Naive thymus-derived CD4-positive, alpha-beta T cell (primary cell): ENCODE measurements at regions of chr5 and their contacts with region 1.

Region 1: DNA sequence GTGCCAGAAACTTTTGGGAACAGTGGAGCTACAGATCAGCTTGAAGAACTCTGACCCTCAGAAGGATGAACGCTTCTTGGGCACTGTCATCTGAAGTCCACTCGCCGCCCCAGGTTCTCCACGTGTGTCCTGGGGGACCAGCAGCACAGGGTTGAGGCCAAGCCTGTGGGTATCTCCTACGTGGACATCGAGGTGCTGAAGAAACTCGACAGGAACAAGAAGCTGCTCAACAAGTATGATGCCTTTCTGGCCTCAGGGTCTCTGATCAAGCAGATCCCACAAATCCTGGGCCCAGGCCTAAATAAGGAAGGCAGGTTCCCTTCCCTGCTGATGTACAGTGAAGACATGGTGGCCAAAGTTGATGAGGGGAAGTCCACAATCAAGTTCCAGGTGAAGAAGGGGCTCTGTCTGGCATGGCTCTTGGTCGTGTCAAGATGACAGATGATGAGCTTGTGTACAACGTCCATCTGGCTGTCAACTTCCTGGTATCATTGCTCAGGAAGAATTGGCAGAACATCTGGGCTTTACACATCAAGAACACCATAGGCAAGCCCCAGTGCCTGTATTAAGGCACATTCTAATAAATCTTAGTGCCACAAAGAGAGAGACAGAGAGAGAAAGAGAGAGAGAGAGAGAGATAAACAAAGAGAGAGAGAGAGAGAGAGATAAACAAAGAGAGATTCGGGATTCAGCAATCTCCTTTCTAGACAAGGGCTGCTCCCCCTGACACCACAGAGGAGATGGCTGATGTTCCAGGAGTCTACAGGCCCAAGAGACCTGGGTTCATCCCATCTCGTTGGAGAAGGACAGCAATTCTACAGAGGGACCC is 45.4 kb upstream of the HSPA9 start:
- DNase-seq: no peak
- ATAC-seq: no peak
- H3K4me3 ChIP-seq: no peak overlapping the region
- H3K4me3 Mint-ChIP-seq: no peak overlapping the region
- H3K27ac ChIP-seq: no peak overlapping the region
- H3K27ac Mint-ChIP-seq: no peak overlapping the region
- H3K4me1 ChIP-seq: no peaks in the 10 kb centered on the region
- H3K4me1 Mint-ChIP-seq: no peaks in the 10 kb centered on the region
- H3K27me3 ChIP-seq: no peaks in the 10 kb centered on the region
- H3K27me3 Mint-ChIP-seq: peaks cover 40 to 62% (median 48%) of the 10 kb centered on the region in 5 donors

Region 2: DNA sequence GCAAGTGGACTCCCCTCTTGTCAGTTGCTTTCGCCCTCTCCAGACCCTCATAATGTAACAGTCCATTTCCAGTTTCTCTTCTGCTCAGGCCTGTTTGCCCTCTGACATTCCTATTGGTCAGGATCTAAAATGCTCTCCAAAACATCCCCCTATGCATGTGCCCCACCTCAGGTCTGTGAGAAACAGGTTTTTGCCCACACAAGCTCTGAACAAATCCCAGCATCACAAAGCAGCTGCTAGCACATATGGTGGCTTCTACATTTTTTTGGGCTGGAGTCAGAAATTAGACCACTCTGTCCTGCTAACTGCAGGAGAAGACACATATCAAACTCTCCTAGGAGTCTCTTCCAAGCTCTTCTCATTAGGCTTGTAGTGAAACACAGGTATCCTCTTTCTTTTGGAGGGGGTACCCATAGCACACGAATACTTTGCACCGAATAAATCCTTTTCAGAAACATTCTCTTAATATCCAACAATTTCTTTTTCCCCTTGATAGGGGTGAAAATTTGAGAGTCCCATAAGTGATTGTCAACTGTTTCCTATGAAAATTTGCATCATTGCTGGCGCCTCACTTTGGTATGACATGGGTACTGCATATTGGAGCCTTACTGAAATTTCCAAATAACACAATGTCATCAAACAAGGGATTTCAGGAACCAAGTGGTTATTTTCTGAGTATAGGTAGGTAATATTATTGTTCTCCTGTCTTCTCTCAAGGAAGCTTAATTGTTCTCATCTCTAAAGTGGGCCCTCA is 26.1 kb before region 1 on chr5:
- CTCF ChIA-PET with region 1: no interaction called
- POLR2A ChIA-PET with region 1: no interaction called
- intact Hi-C with region 1: no loop called
- DNase-seq: no peak
- ATAC-seq: no peak
- H3K4me3 ChIP-seq: no peak overlapping the region
- H3K4me3 Mint-ChIP-seq: no peak overlapping the region
- H3K27ac ChIP-seq: no peak overlapping the region
- H3K27ac Mint-ChIP-seq: no peak overlapping the region
- H3K4me1 ChIP-seq: no peaks in the 10 kb centered on the region
- H3K4me1 Mint-ChIP-seq: no peaks in the 10 kb centered on the region
- H3K27me3 ChIP-seq: peaks cover 0 to 4% of the 10 kb centered on the region in 2 donors
- H3K27me3 Mint-ChIP-seq: peaks cover 31 to 51% (median 48%) of the 10 kb centered on the region in 5 donors

Region 3: DNA sequence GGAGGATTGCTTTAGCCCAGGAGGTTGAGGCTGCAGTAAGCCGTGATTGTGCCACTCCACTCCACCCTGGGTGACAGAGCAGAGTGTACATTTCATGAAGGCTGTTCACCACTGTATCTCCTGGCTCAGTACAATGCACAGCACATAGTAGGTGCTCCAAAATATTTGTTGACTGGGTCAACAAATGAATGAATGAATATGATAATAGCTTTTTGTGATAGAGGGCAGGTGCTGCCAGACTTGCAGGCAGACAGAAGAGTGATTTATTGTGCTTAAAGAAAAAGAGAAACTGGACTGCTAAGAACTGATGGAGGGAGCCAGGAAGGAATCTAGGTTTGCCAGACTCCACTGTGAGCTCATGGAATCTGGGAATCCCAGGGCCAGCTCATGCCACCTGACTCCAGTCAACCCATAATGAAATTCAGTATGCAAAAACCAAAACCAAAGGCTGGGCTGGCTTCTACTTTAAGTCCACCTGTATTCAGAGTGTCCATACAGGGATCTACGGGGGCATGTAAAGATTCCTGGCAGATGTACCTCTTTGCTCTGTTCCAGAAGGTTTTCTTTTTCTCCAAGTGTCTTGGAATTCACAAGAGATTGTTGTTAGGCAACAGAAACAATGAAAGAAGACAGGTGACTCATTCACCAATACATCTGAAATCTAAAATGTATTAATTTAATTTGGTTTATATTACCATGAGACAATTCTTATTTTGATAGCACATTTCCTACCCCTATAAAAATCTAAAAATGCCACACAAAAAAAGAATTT is 117.1 kb after region 1 on chr5:
- CTCF ChIA-PET with region 1: interaction called, 10 read pairs
- POLR2A ChIA-PET with region 1: no interaction called
- intact Hi-C with region 1: no loop called
- DNase-seq: no peak
- ATAC-seq: no peak
- H3K4me3 ChIP-seq: no peak overlapping the region
- H3K4me3 Mint-ChIP-seq: no peak overlapping the region
- H3K27ac ChIP-seq: no peak overlapping the region
- H3K27ac Mint-ChIP-seq: no peak overlapping the region
- H3K4me1 ChIP-seq: peaks cover 0 to 3% of the 10 kb centered on the region in 2 donors
- H3K4me1 Mint-ChIP-seq: peaks cover 4 to 19% (median 11%) of the 10 kb centered on the region in 7 donors
- H3K27me3 ChIP-seq: peaks cover 0 to 5% of the 10 kb centered on the region in 2 donors
- H3K27me3 Mint-ChIP-seq: peaks cover 8 to 38% (median 27%) of the 10 kb centered on the region in 5 donors